ENCODE measurements at regions of chr6 and their contacts with region 1.

Region 1: DNA sequence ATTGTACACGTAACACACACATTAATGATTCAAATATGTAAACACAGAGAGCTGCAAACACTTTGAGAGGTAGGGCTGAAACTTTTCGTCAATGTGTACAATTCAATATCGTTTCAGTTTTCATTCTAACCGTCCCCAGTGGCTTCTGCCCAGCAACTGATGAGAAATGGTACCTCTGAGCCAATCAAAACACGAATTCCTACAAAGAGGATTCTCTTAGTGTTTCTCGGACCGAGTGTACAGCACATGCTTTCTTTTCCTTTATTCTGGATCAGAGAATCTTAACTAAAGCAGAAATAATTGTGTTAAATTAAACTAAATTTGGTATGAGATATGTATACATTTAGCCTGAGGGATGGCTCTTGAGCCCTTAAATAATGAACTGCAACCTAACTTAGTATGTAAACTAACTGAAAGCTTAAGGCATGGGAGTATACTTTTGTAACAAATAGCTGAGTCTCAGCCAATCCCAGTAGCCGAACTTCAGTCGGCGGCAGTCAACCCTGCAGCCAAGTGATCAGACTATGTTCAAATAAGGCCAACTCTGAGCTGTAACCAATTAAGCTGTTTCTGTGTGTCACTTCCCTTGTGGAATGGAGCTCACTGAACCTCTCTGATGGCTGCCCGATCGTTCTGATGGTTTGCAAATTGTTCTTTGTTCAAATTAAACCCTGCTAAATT is 16.1 kb downstream of the BTN2A1 start:
- DNase-seq: peak; percentile 94
- ATAC-seq: peak; percentile 94
- H3K4me3 ChIP-seq: peak overlapping the region; percentile 55 to 88 (median 67)
- H3K4me3 Mint-ChIP-seq: peak overlapping the region; percentile 92
- H3K27ac ChIP-seq: peak overlapping the region; percentile 92 to 94
- H3K27ac Mint-ChIP-seq: peak overlapping the region; percentile 98
- H3K4me1 ChIP-seq: peaks cover 58 to 61% of the 10 kb centered on the region in 2 donors
- H3K4me1 Mint-ChIP-seq: peaks cover 64% of the 10 kb centered on the region
- H3K27me3 ChIP-seq: no peaks in the 10 kb centered on the region
- H3K27me3 Mint-ChIP-seq: no peaks in the 10 kb centered on the region
- CTCF ChIP-seq: no peak

Region 2: DNA sequence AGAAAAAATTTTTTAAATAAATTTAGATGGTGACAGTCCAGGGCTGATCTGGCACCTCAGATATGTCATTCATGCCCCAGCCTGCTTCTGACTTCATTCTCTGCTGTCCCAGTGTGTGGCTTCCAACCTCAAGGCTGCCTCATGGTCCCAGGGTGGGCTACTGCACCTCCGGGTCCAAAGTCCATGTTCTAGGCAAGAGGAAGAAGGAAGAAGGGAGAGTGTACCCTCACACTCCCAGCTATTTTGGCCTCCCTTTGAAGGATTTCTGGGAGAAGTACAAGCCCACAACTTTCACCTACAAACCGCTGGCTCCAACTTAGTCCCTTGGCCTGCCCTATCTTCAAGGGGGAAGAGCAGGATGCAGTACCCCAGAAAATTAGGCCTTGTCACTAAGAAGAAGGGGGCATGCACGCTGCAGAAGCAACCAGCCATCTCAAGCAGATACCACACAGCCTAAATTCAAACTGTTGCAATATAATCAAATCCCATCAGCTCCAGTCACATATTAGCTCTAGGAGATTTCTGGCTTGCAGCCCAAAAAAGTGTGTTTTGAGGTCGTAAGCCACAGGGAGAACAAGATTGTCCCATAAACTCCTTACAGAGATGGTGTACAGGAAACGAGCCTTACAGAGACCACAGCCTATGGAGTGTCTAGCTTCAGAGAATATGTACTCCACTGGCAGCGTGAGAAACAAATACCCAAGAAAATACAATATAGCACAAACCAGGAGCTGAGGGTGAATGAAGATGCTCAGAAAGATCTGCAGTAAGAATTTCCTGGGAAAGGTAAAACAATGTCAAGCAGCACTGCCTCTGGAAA is 109.8 kb before region 1 on chr6:
- CTCF ChIA-PET with region 1: no interaction called
- POLR2A ChIA-PET with region 1: no interaction called
- intact Hi-C with region 1: loop called (anchors 2 kb)
- DNase-seq: peak; percentile 61
- ATAC-seq: no peak
- H3K4me3 ChIP-seq: peak overlapping the region; percentile 69 to 99 (median 71)
- H3K4me3 Mint-ChIP-seq: no peak overlapping the region
- H3K27ac ChIP-seq: peak overlapping the region; percentile 84 to 90
- H3K27ac Mint-ChIP-seq: no peak overlapping the region
- H3K4me1 ChIP-seq: peaks cover 35 to 46% of the 10 kb centered on the region in 2 donors
- H3K4me1 Mint-ChIP-seq: peaks cover 40% of the 10 kb centered on the region
- H3K27me3 ChIP-seq: peaks cover 0 to 12% (median 4%) of the 10 kb centered on the region in 4 experiments
- H3K27me3 Mint-ChIP-seq: peaks cover 9% of the 10 kb centered on the region
- CTCF ChIP-seq: no peak

Region 3: GRCh38 chr6:26383624-26384417 is 90.1 kb before region 1 on chr6:
- CTCF ChIA-PET with region 1: no interaction called
- POLR2A ChIA-PET with region 1: interaction called, 6 read pairs
- intact Hi-C with region 1: loop called (anchors 5 kb)
- DNase-seq: peak; percentile 54
- ATAC-seq: no peak
- H3K4me3 ChIP-seq: peak overlapping the region; percentile 70 to 97 (median 89)
- H3K4me3 Mint-ChIP-seq: peak overlapping the region; percentile 97
- H3K27ac ChIP-seq: peak overlapping the region; percentile 90 to 98
- H3K27ac Mint-ChIP-seq: peak overlapping the region; percentile 96
- H3K4me1 ChIP-seq: peaks cover 35 to 49% of the 10 kb centered on the region in 2 donors
- H3K4me1 Mint-ChIP-seq: peaks cover 66% of the 10 kb centered on the region
- H3K27me3 ChIP-seq: no peaks in the 10 kb centered on the region
- H3K27me3 Mint-ChIP-seq: no peaks in the 10 kb centered on the region
- CTCF ChIP-seq: no peak

Region 4: DNA sequence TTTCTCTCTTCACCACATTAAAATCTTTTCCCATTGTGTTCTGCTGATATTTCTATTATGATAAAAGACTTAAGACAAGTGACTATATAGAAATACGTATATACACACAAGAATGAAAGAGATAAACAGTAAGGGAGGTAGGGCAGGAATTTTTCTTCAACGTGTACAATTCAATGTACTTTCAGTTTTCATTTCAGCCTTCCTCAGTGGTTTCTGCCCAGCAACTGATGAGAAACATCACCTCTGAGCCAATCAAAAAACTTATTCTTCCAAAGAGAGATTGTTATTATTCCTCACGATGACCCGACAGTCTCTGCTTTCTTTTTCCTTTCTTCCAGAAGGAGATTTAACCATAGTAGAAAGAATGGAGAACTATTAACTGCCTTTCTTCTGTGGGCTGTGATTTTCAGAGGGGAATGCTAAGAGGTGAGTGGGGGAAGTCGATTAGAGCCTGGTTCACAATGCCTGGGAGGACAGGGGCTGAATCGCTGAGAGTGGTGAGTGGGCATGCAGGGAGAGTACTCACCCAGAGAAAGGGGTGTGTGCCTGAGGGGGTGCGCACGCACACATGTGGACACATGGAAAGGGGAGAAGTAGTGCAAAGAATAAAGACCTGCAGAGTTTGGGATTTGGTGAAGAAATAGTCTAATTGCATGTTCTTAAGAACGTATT is 71.8 kb before region 1 on chr6 and contains the start of gene BTN3A1:
- CTCF ChIA-PET with region 1: interaction called, 3 read pairs
- POLR2A ChIA-PET with region 1: no interaction called
- intact Hi-C with region 1: loop called (anchors 1 kb)
- DNase-seq: peak; percentile 86
- ATAC-seq: peak; percentile 87
- H3K4me3 ChIP-seq: peak within 1 kb of the TSS; percentile 51 to 98 (median 94)
- H3K4me3 Mint-ChIP-seq: peak within 1 kb of the TSS; percentile 98
- H3K27ac ChIP-seq: peak within 1 kb of the TSS; percentile 64 to 84
- H3K27ac Mint-ChIP-seq: peak within 1 kb of the TSS; percentile 97
- H3K4me1 ChIP-seq: peaks cover 43 to 53% of the 10 kb centered on the region in 2 donors
- H3K4me1 Mint-ChIP-seq: peaks cover 63% of the 10 kb centered on the region
- H3K27me3 ChIP-seq: no peaks in the 10 kb centered on the region
- H3K27me3 Mint-ChIP-seq: no peaks in the 10 kb centered on the region
- CTCF ChIP-seq: no peak
- total RNA-seq, gene BTN3A1: 173 and 175 TPM in 2 replicates

Region 5: DNA sequence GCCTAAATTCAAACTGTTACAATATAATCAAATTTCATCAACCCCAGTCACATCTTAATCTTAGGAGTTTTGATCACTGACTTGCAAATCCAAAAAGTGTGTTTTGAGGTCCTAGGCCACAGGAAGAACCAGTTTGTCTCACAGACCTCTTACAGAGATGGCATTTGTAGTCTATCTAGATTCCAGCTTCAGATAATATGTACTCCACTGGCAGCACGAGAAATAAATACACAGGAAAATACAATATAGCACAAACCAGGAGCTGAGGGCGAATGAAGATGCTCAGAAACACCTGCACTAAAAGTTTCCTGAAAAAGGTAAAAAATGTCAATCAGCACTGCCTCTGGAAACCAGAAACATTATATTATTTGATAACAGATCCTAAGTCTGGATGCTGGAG is 34.2 kb before region 1 on chr6:
- CTCF ChIA-PET with region 1: no interaction called
- POLR2A ChIA-PET with region 1: interaction called, 5 read pairs
- intact Hi-C with region 1: loop called (anchors 1 kb)
- DNase-seq: peak; percentile 49
- ATAC-seq: no peak
- H3K4me3 ChIP-seq: peak overlapping the region; percentile 76 to 100 (median 87)
- H3K4me3 Mint-ChIP-seq: peak overlapping the region; percentile 98
- H3K27ac ChIP-seq: peak overlapping the region; percentile 94 to 96
- H3K27ac Mint-ChIP-seq: peak overlapping the region; percentile 90
- H3K4me1 ChIP-seq: peaks cover 19 to 31% of the 10 kb centered on the region in 2 donors
- H3K4me1 Mint-ChIP-seq: peaks cover 38% of the 10 kb centered on the region
- H3K27me3 ChIP-seq: no peaks in the 10 kb centered on the region
- H3K27me3 Mint-ChIP-seq: no peaks in the 10 kb centered on the region
- CTCF ChIP-seq: no peak

Region 6: GRCh38 chr6:26457806-26458688 is 15.9 kb before region 1 on chr6 and contains the start of gene BTN2A1:
- CTCF ChIA-PET with region 1: interaction called, 3 read pairs
- POLR2A ChIA-PET with region 1: no interaction called
- intact Hi-C with region 1: loop called (anchors 1 kb)
- DNase-seq: peak; percentile 89
- ATAC-seq: peak; percentile 96
- H3K4me3 ChIP-seq: peak within 1 kb of the TSS; percentile 75 to 96 (median 92)
- H3K4me3 Mint-ChIP-seq: peak within 1 kb of the TSS; percentile 100
- H3K27ac ChIP-seq: peak within 1 kb of the TSS; percentile 77 to 89
- H3K27ac Mint-ChIP-seq: peak within 1 kb of the TSS; percentile 98
- H3K4me1 ChIP-seq: peaks cover 30 to 47% of the 10 kb centered on the region in 2 donors
- H3K4me1 Mint-ChIP-seq: peaks cover 72% of the 10 kb centered on the region
- H3K27me3 ChIP-seq: no peaks in the 10 kb centered on the region
- H3K27me3 Mint-ChIP-seq: no peaks in the 10 kb centered on the region
- CTCF ChIP-seq: no peak
- total RNA-seq, gene BTN2A1: 63.3 and 69.6 TPM in 2 replicates

Region 7: DNA sequence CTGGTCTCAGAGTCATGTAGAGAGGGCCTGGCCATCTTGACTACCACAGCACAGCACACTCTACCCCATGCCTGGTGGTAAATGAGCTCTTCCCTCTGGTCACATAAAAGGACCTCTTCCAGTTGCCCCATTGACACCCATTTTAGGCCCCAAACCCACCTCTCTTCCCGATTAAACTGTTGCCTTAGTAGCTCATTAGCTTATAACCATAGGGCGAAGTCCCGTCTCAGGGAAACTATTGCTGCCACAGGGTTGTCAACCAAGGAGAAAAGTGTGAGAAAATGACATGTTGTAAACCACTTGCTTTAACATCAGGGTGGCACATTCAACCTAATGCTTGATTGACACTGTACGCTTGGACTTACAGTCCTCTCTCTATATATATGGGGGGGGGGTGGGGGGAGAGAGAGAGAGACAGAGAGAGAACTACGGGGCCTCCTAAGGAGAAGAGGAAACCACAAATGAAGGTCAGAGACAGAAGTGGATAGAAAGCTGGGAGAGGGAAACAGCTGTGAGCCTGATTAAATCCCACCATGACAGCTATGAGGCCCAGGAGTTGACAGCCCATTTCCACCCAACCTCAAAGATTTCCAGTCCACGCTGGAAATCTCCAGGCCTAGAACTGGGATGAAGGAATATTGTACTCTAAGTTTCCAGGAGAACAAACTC is 11.3 kb after region 1 on chr6:
- CTCF ChIA-PET with region 1: no interaction called
- POLR2A ChIA-PET with region 1: no interaction called
- intact Hi-C with region 1: no loop called
- DNase-seq: no peak
- ATAC-seq: no peak
- H3K4me3 ChIP-seq: no peak overlapping the region
- H3K4me3 Mint-ChIP-seq: no peak overlapping the region
- H3K27ac ChIP-seq: no peak overlapping the region
- H3K27ac Mint-ChIP-seq: no peak overlapping the region
- H3K4me1 ChIP-seq: peaks cover 7 to 8% of the 10 kb centered on the region in 2 donors
- H3K4me1 Mint-ChIP-seq: peaks cover 9% of the 10 kb centered on the region
- H3K27me3 ChIP-seq: no peaks in the 10 kb centered on the region
- H3K27me3 Mint-ChIP-seq: no peaks in the 10 kb centered on the region
- CTCF ChIP-seq: no peak

Region 8: DNA sequence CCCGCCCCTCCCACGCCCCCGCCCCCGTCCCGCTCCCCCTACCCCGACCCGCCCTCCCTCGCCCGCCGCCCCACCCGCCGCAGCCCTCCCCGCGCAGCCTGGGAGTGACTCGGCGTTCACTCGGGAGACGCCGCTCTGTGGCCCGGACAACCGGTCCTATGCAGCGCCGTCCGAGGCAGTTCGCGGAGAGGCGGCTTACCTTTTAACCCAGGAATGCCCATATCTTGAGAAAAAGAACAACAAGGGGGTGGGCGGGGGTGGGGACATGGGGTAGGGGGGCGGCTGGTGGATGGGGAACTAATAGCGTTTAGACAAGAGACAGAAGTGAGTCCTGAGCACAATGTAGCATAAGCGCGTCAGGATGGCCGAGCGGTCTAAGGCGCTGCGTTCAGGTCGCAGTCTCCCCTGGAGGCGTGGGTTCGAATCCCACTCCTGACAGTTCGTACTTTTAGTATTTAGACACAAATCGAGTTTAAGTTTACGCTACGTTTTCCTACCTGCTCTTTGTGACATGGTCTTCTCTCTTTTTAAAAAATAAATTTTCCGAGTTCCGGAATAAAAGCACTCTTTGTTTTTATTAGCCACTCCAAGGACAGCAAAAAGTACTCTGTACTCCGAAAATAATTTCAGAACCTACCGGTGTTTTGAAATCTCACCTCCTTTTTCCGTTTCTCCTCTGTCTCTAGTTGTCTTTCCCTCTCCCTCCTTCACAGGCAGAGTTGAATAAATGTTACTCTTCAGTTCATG is 47.1 kb after region 1 on chr6:
- CTCF ChIA-PET with region 1: no interaction called
- POLR2A ChIA-PET with region 1: no interaction called
- intact Hi-C with region 1: loop called (anchors 1 kb)
- DNase-seq: peak; percentile 94
- ATAC-seq: peak; percentile 64
- H3K4me3 ChIP-seq: peak overlapping the region; percentile 60 to 95 (median 74)
- H3K4me3 Mint-ChIP-seq: peak overlapping the region; percentile 84
- H3K27ac ChIP-seq: peak overlapping the region; percentile 85 to 94
- H3K27ac Mint-ChIP-seq: peak overlapping the region; percentile 91
- H3K4me1 ChIP-seq: peaks cover 17 to 20% of the 10 kb centered on the region in 2 donors
- H3K4me1 Mint-ChIP-seq: peaks cover 33% of the 10 kb centered on the region
- H3K27me3 ChIP-seq: no peaks in the 10 kb centered on the region
- H3K27me3 Mint-ChIP-seq: no peaks in the 10 kb centered on the region
- CTCF ChIP-seq: no peak